CD4-positive, alpha-beta memory T cell (primary cell): ENCODE measurements at regions of chr15 and their contacts with region 1.

Region 1: DNA sequence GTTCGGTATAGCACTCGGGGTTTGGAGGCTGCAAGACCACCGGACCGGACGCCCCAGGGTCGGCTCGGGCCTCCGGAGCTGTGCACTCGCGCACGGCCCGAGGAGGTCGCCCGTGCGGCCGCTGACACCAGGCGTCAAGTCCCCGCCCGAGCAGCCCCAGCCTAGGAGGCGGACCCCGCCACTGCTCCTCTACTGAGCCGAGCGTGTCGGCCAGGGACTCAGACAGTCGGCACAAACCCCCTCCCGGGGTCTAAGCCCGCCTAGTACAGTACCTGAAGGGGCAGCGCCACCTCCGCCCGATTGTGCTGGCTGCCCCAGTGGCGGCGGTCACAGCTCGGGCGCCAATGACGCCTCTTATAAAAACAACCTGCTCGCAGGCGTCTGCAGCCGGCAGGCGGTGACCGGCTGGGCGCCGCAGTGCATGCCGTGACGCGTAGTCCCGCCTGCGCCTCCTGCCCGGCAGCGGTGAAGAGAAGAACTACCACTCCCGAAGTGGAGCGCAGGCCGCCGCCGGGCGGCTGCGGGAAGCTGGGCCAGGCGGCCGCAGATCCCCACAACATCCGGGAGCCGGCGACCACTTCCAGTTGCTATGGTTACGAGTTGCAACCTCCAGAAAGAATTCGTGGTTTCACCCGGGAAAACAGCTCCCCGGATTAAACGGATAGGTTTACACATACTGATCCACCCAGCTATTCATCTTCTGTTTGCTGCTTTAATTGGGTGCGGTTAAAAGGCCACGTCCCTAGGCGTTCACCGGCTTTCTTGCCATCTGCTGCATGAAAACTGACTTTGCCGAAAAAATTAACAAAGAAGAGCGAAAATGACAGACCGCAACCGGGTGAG is at the starts of genes CCPG1 and PIERCE2:
- DNase-seq: peak; percentile 87 to 91 (median 90)
- H3K4me3 ChIP-seq: peak within 1 kb of the TSS; percentile 45 to 91
- H3K4me3 Mint-ChIP-seq: peak within 1 kb of the TSS; percentile 91 to 96 (median 95)
- H3K27ac ChIP-seq: peak within 1 kb of the TSS; percentile 70
- H3K27ac Mint-ChIP-seq: peak within 1 kb of the TSS; percentile 86 to 96 (median 94)
- H3K4me1 ChIP-seq: peaks cover 31% of the 10 kb centered on the region
- H3K4me1 Mint-ChIP-seq: peaks cover 18 to 39% (median 27%) of the 10 kb centered on the region in 4 donors
- H3K27me3 ChIP-seq: no peaks in the 10 kb centered on the region
- H3K27me3 Mint-ChIP-seq: no peaks in the 10 kb centered on the region
- total RNA-seq, gene CCPG1: 35.4 to 38.2 TPM
- total RNA-seq, gene PIERCE2: not detected

Region 2: GRCh38 chr15:55196458-55197361 is 211.5 kb before region 1 on chr15 and contains the start of gene RSL24D1:
- CTCF ChIA-PET with region 1: interaction called, 7 read pairs
- POLR2A ChIA-PET with region 1: interaction called, 14 read pairs
- intact Hi-C with region 1: loop called (anchors 1 kb)
- DNase-seq: peak; percentile 94 to 98 (median 97)
- H3K4me3 ChIP-seq: peak within 1 kb of the TSS; percentile 90 to 97
- H3K4me3 Mint-ChIP-seq: no peak within 1 kb of the TSS
- H3K27ac ChIP-seq: peak within 1 kb of the TSS; percentile 87
- H3K27ac Mint-ChIP-seq: no peak within 1 kb of the TSS
- H3K4me1 ChIP-seq: peaks cover 40% of the 10 kb centered on the region
- H3K4me1 Mint-ChIP-seq: peaks cover 10 to 17% (median 13%) of the 10 kb centered on the region in 4 donors
- H3K27me3 ChIP-seq: no peaks in the 10 kb centered on the region
- H3K27me3 Mint-ChIP-seq: no peaks in the 10 kb centered on the region
- total RNA-seq, gene RSL24D1: 103 to 107 TPM

Region 3: DNA sequence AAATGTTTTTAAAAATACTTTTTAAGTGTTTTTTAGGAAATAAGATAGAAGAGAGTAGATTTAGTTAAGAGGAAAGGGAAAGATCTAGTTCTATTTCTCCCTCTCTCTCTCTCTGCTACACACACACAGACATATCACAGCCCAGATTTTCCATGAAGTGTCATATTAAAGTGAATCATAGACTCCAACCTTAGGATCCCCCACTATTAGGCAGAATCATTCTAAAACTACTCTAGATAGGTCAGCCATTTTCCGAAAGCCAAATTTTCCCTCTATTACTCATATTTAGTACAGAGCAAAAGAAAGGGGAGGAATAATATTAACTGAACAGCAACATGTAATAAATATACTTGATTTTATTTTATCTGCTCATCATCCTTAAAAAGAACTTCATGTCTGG is 166.3 kb before region 1 on chr15:
- CTCF ChIA-PET with region 1: no interaction called
- POLR2A ChIA-PET with region 1: no interaction called
- intact Hi-C with region 1: no loop called
- DNase-seq: no peak
- H3K4me3 ChIP-seq: no peak overlapping the region
- H3K4me3 Mint-ChIP-seq: no peak overlapping the region
- H3K27ac ChIP-seq: no peak overlapping the region
- H3K27ac Mint-ChIP-seq: peak overlapping the region in 3 of 7 donors; percentile 25 to 53 (median 37)
- H3K4me1 ChIP-seq: peaks cover 38% of the 10 kb centered on the region
- H3K4me1 Mint-ChIP-seq: peaks cover 29 to 82% (median 47%) of the 10 kb centered on the region in 4 donors
- H3K27me3 ChIP-seq: no peaks in the 10 kb centered on the region
- H3K27me3 Mint-ChIP-seq: no peaks in the 10 kb centered on the region

Region 4: DNA sequence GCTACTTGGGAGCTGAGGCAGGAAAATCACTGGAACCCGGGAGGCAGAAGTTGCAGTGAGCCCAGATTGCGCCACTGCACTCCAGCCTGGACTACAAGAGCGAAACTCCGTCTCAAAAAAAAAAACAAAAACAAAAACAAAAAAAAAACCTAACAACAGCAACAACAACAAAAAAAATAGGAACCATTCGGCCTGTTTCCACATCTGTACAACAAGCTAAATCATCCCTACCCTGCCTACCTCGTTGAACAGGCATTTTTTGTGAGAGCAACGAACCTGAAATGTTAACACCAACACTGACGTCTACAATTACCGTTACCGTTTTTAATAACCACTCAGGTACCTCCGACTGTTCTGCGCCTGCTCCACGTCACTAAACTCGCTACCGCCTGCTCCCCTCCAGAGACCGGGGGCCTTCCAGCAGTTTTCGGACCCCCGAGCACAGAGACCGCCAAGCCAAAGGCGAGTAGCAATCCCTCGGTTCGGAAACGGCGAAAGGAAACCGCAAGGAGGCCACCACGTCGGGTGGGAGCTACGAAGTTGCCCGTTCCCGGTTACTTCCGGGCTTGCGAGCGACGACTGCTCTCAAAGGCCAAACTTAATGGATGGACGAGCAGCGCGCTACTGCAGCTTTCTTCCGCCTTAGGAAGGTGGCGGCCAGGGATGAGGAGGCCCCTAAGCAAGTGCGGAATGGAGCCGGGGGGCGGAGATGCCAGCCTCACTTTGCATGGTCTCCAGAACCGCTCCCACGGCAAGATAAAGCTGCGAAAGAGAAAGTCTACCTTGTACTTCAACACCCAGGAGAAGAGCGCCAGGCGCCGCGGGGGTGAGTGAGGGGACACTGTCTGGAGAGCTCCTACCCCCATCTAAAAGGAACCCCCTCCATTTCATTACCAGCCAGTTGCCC is 89.3 kb before region 1 on chr15 and contains the starts of genes PIGB and PIGBOS1:
- CTCF ChIA-PET with region 1: interaction called, 11 read pairs
- POLR2A ChIA-PET with region 1: interaction called, 22 read pairs
- intact Hi-C with region 1: loop called (anchors 1 kb)
- DNase-seq: peak; percentile 83 to 88 (median 87)
- H3K4me3 ChIP-seq: peak within 1 kb of the TSS; percentile 98 to 100
- H3K4me3 Mint-ChIP-seq: peak within 1 kb of the TSS; percentile 96 to 100 (median 98)
- H3K27ac ChIP-seq: peak within 1 kb of the TSS; percentile 93
- H3K27ac Mint-ChIP-seq: peak within 1 kb of the TSS; percentile 99 to 100 (median 100)
- H3K4me1 ChIP-seq: peaks cover 61% of the 10 kb centered on the region
- H3K4me1 Mint-ChIP-seq: peaks cover 44 to 82% (median 64%) of the 10 kb centered on the region in 4 donors
- H3K27me3 ChIP-seq: no peaks in the 10 kb centered on the region
- H3K27me3 Mint-ChIP-seq: no peaks in the 10 kb centered on the region
- total RNA-seq, gene PIGB: 26.4 to 28.6 TPM
- total RNA-seq, gene PIGBOS1: 14.1 to 20.3 TPM

Region 5: DNA sequence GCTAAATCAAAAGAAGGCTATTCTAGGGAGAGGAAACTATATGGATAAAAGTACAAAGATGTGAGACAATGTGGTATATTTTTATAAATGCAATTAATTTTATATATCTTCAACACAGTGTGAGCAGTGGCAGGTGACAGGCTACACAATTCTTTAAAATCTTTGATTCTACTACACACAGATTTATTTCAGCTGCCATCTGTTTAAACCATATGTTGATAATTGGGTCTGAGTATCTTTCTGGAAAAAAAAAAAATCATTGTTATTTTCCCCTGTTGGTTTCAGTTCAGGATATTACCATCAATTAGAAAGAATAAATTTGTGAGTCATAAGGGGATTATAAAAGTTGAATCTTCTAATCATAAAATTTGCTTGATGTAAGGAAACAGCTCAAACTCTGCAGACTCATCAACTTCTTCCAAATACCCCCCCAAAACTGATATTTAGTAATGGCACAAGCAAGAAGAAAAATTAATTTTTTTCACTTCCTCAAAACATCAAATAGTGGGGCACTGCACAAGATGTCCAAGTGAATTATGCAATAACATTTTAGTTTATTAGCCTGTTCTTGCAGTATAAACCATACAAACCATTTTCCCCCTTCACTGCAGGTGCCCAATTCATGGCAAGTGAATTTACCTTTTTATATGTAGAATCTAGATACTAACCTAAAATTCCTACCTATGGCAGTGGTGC is 12.1 kb after region 1 on chr15:
- CTCF ChIA-PET with region 1: interaction called, 10 read pairs
- POLR2A ChIA-PET with region 1: no interaction called
- intact Hi-C with region 1: no loop called
- DNase-seq: no peak
- H3K4me3 ChIP-seq: no peak overlapping the region
- H3K4me3 Mint-ChIP-seq: no peak overlapping the region
- H3K27ac ChIP-seq: no peak overlapping the region
- H3K27ac Mint-ChIP-seq: peak overlapping the region in 1 of 7 donors; percentile 19
- H3K4me1 ChIP-seq: no peaks in the 10 kb centered on the region
- H3K4me1 Mint-ChIP-seq: no peaks in the 10 kb centered on the region
- H3K27me3 ChIP-seq: no peaks in the 10 kb centered on the region
- H3K27me3 Mint-ChIP-seq: no peaks in the 10 kb centered on the region

Region 6: DNA sequence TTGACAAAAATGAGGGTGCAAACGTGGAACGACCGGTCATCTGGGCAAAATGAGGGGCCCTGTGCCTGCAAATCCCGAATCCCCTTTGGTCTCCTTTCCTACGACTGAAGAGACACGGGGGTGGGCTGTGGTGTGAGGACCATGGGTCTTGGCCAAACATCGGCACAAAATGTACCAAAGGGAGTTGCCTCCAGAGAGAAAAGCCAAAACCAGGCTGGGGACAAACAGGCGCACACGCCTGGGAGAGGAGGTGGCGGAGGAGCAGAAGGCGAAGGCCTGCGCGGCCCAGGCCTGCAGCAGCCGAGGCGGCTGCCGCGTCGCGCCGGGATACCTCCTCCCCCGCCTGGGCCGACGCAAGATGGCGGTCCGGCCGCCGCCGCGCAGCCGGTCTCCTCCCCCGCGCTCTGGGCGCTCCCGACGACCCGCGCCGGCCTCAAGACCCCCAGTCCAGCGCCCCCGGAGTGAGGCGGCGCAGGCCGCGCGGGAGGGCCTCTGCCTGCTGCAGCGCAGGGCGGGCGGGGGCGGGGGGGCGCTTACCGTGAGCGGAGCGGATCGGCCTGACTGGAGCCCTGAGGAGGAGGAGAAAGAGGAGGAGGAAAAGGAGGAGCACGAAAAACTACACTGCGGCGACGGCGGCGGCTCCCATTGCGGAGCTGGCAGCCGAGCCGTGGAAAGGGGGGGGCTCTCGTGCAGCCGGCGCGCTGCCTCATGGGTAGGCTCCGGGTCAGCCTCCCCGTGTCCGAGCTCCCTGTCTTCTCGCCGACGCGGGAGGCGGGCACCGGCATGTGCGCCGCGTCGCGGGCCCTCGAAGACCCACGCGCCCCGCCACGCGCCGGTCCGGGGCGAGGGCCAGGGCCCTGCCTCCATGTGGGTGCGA is 1325.0 kb after region 1 on chr15 and contains the start of gene ZNF280D:
- CTCF ChIA-PET with region 1: no interaction called
- POLR2A ChIA-PET with region 1: no interaction called
- intact Hi-C with region 1: loop called (anchors 10 kb)
- DNase-seq: peak; percentile 78 to 85 (median 82)
- H3K4me3 ChIP-seq: peak within 1 kb of the TSS; percentile 54 to 69
- H3K4me3 Mint-ChIP-seq: peak within 1 kb of the TSS; percentile 92 to 98 (median 96)
- H3K27ac ChIP-seq: peak within 1 kb of the TSS; percentile 73
- H3K27ac Mint-ChIP-seq: peak within 1 kb of the TSS; percentile 93 to 98 (median 96)
- H3K4me1 ChIP-seq: peaks cover 40% of the 10 kb centered on the region
- H3K4me1 Mint-ChIP-seq: peaks cover 28 to 44% (median 38%) of the 10 kb centered on the region in 4 donors
- H3K27me3 ChIP-seq: no peaks in the 10 kb centered on the region
- H3K27me3 Mint-ChIP-seq: no peaks in the 10 kb centered on the region
- total RNA-seq, gene ZNF280D: 44.5 to 50.1 TPM